Activated T-helper 1 cell treated with anti-CD3 and anti-CD28 coated beads, Interleukin-12 subunit alpha, Interleukin-12 subunit beta, Interleukin-2, Interleukin-4 antibody, amounts not matched to agents 30 ng/mL and 10 ng/mL and 1 ng/mL, durations not matched to agents 14 hours and 24 hours and 36 hours (primary cell): ENCODE measurements at regions of chr19 and their contacts with region 1.

Region 1: GRCh38 chr19:36850559-36851442 is at the start of gene ZNF345:
- DNase-seq: peak; percentile 81
- H3K4me3 Mint-ChIP-seq: no peak within 1 kb of the TSS
- H3K27ac Mint-ChIP-seq: no peak within 1 kb of the TSS
- H3K4me1 Mint-ChIP-seq: peaks cover 6% of the 10 kb centered on the region
- H3K27me3 Mint-ChIP-seq: no peaks in the 10 kb centered on the region
- total RNA-seq, gene ZNF345: 3.7 and 4.4 TPM in 2 replicates

Region 2: DNA sequence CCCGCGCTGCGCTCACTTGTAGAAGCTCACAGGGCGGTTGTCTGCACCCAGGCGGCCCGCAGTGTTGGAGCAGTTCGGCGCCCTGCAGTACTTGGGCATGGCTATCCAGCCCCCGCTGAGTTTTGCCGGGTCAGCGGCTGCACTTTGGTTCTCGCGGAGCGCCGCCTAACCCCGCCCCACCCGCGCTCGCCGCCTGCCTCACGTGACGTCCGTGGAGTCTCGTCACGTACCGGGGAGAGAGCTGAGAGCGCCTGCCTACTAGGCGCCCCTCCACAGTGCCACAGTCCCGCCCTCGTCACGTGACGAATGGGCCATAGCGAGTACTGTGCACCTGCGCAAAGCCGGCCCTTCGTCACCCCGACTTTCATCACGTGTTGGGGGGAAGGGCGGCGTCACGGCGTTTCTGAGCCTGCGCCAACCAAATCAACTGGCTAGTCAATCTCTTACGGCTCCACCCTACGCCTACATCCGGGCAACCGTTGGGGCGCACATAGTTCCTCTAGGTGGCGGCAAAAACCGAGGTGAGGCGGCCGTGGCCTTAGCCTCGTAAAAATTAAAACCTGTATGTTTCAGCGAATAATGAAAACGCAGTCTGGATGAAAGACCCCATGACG is 796.6 kb before region 1 on chr19 and contains the start of gene THAP8:
- intact Hi-C with region 1: loop called (anchors 10 kb)
- DNase-seq: peak; percentile 100
- H3K4me3 Mint-ChIP-seq: peak within 1 kb of the TSS; percentile 99
- H3K27ac Mint-ChIP-seq: peak within 1 kb of the TSS; percentile 96
- H3K4me1 Mint-ChIP-seq: peaks cover 45% of the 10 kb centered on the region
- H3K27me3 Mint-ChIP-seq: no peaks in the 10 kb centered on the region
- total RNA-seq, gene THAP8: 1.6 TPM in 2 replicates

Region 3: DNA sequence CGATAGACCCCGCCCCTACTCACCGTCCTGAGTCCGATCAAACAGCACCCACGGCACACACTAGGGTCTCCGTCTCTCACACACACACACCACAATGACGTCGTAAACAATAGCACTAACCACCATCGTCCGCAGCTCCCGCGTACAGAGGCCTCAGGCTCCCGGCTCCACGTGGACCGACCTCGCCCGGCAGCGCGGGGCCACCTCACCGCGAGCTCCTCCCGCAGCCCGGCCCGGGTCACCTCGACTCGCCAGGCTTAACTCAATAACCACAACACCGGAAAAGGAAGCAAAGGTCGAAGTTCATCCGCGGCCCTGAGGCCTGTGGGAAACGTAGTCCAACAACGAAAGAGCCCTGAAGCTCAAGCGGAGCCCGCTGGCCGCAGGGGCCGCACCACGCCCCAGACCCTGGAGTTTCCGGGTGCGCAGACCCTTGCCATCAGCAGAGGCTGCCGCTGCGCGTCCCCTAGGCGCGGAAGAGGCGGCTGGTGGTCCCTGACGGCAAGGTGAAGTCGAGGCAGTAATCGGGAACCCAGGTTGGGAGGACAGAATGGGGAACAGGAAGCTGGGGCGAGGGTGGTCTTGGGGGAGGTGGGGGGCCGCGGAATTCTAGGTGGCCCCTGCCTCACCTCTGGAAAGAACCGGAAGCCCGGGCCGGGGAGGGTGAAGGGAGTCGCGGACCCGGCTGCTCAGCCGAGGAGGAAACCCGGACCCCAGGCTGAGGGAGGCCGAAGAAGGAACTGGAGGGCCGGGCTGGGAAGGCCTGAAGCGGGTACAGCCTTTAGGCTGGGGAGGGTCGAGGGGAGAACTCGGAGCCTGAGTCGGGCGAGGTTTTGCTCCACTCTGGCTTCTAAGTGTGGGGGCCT is 277.5 kb before region 1 on chr19 and contains the start of gene ZNF529:
- intact Hi-C with region 1: loop called (anchors 1 kb)
- DNase-seq: peak; percentile 85
- H3K4me3 Mint-ChIP-seq: peak within 1 kb of the TSS; percentile 89
- H3K27ac Mint-ChIP-seq: peak within 1 kb of the TSS; percentile 98
- H3K4me1 Mint-ChIP-seq: peaks cover 31% of the 10 kb centered on the region
- H3K27me3 Mint-ChIP-seq: no peaks in the 10 kb centered on the region
- total RNA-seq, gene ZNF529: 20.3 and 20.7 TPM in 2 replicates

Region 4: DNA sequence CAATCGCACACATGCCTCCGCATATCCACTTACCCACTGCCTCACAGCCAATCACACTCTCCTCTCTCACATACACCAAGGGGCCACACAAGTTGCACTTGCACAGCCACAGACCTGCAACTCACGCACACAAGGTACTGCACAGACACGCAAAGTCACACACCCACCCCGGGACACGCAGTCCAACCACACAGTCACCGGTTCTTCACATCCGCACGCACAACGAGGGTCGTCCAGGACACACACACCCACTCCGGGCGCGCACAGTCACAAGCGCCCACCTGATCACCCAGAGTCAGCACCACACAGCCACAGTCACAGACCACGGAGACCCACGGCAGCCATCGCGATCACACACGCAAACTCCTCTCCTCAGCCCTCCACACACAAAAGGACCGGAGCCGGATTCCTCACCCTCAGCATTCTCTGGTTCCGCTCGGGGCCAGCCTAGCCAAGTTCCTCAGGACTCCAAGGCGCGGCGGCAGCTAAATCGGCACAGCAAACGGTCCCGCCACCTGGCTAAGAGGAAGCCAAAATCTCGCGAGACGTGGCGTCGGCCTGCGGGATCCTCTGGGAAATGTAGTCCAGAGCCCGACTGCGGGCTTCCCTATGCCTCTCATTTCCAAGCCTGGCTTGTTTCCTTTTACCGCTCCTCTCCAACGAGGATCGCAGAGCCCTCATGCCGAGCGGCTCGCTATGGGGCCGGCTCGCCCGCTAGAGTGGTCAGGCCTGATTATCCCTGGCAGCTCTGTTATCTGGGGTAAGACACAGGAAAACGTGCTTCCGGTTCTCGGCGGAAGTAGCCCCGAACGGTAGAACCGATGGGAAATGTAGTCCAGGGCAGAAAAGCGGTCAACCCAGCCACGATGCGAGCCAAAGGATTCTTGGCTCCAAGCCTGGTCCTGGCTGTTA is 78.2 kb before region 1 on chr19 and contains the start of gene ZNF850:
- intact Hi-C with region 1: loop called (anchors 1 kb)
- DNase-seq: peak; percentile 88
- H3K4me3 Mint-ChIP-seq: peak within 1 kb of the TSS; percentile 98
- H3K27ac Mint-ChIP-seq: peak within 1 kb of the TSS; percentile 93
- H3K4me1 Mint-ChIP-seq: peaks cover 18% of the 10 kb centered on the region
- H3K27me3 Mint-ChIP-seq: no peaks in the 10 kb centered on the region
- total RNA-seq, gene ZNF850: 3.2 and 3.7 TPM in 2 replicates

Region 5: GRCh38 chr19:36962346-36962745 is 111.5 kb after region 1 on chr19:
- intact Hi-C with region 1: no loop called
- DNase-seq: no peak
- H3K4me3 Mint-ChIP-seq: no peak overlapping the region
- H3K27ac Mint-ChIP-seq: no peak overlapping the region
- H3K4me1 Mint-ChIP-seq: no peaks in the 10 kb centered on the region
- H3K27me3 Mint-ChIP-seq: no peaks in the 10 kb centered on the region

Region 6: DNA sequence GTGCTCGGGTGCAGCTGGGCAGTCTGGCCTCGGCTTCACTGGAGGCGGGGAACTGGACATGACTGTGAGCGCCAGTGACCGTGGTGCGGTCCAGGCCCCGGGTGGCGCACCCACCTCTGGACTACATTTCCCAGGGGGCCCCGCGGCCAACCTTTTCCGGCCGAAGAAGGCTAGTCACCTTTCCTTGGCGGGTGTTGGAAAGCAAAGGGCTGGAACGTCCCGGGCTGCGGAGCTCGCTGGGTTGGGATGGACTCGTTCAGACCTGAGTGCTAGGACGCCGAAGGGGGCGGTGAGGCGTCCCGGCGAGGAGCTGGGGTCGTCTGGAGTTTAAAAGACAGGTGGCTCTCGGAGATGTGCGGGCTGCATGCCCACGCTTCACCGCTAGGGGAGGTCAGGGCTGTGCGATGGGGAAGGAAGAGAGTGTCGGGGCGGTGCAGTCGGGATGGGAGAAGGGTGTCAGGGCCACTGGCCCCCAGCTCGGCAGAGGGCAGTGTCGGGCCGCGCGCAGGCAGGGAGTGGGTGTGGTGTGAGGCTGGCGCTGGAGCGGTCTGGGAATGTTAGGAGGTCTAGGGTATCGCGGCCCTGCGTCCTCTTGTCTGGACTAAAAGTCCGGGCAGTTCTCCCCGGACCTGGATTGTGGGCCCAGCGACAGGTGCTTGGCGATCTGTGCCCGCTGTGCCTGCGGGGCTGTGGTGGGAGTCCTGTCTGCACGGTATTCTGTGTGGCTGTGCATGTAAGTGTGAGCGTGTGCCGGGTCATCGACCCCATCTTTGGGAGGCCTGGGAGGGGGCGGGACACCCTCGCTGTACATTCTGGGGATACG is 122.4 kb after region 1 on chr19:
- intact Hi-C with region 1: loop called (anchors 2 kb)
- DNase-seq: peak; percentile 67
- H3K4me3 Mint-ChIP-seq: peak overlapping the region; percentile 98
- H3K27ac Mint-ChIP-seq: peak overlapping the region; percentile 87
- H3K4me1 Mint-ChIP-seq: peaks cover 12% of the 10 kb centered on the region
- H3K27me3 Mint-ChIP-seq: no peaks in the 10 kb centered on the region

Region 7: GRCh38 chr19:37045140-37045539 is 194.3 kb after region 1 on chr19:
- intact Hi-C with region 1: no loop called
- DNase-seq: no peak
- H3K4me3 Mint-ChIP-seq: no peak overlapping the region
- H3K27ac Mint-ChIP-seq: no peak overlapping the region
- H3K4me1 Mint-ChIP-seq: no peaks in the 10 kb centered on the region
- H3K27me3 Mint-ChIP-seq: no peaks in the 10 kb centered on the region

Region 8: GRCh38 chr19:37370880-37371661 is 520.3 kb after region 1 on chr19 and contains the start of gene ZNF527:
- intact Hi-C with region 1: loop called (anchors 1 kb)
- DNase-seq: peak; percentile 96
- H3K4me3 Mint-ChIP-seq: peak within 1 kb of the TSS; percentile 99
- H3K27ac Mint-ChIP-seq: peak within 1 kb of the TSS; percentile 87
- H3K4me1 Mint-ChIP-seq: peaks cover 13% of the 10 kb centered on the region
- H3K27me3 Mint-ChIP-seq: no peaks in the 10 kb centered on the region
- total RNA-seq, gene ZNF527: 3.9 and 4.5 TPM in 2 replicates